ENCODE measurements at regions of chr16 and their contacts with region 1.

Region 1: GRCh38 chr16:10918294-10919002 is 23.8 kb downstream of the DEXI start:
- DNase-seq: peak; percentile 91 to 95 (median 94)
- ATAC-seq: peak; percentile 34 to 78 (median 71)
- H3K4me3 ChIP-seq: peak overlapping the region in 7 of 12 donors; percentile 14 to 51 (median 27)
- H3K27ac ChIP-seq: peak overlapping the region in 10 of 12 donors; percentile 26 to 72 (median 64)
- H3K4me1 ChIP-seq: peaks cover 15 to 58% (median 38%) of the 10 kb centered on the region in 12 donors
- H3K27me3 ChIP-seq: no peaks in the 10 kb centered on the region
- CTCF ChIP-seq: peak; percentile 91 to 99 (median 97)
- POLR2A ChIP-seq: no peak

Region 2: DNA sequence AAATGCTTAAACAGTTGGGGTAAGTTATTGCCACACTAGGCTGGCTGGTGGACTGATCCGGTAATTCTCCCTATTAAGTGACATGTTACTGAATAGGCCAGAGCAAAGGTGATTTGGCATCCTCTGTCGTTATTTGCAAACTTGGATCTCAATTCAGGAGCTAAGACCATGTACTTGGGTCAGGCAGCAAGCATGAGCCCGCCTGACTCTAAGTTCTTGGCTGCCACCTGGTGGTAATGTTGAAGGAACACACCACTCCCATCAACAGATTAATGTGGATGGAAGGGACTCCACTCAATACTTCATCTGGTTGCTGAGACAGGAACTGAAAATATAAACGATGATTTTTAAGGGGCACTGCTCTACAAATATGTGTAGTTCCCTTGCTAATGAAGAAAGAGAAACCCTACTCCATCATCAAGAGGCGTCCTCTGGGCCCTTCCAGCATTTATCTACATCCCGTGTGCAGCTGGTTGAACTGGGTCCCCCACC is 408.9 kb before region 1 on chr16:
- intact Hi-C with region 1: loop called in 6 of 10 experiments (anchors 2 to 10 kb)
- DNase-seq: peak in 4 of 5 donors; percentile 49 to 71 (median 60)
- ATAC-seq: peak; percentile 84 to 91 (median 90)
- H3K4me3 ChIP-seq: no peak overlapping the region
- H3K27ac ChIP-seq: no peak overlapping the region
- H3K4me1 ChIP-seq: peaks cover 0 to 8% (median 5%) of the 10 kb centered on the region in 12 donors
- H3K27me3 ChIP-seq: no peaks in the 10 kb centered on the region
- CTCF ChIP-seq: peak; percentile 72 to 93 (median 84)
- POLR2A ChIP-seq: no peak

Region 3: DNA sequence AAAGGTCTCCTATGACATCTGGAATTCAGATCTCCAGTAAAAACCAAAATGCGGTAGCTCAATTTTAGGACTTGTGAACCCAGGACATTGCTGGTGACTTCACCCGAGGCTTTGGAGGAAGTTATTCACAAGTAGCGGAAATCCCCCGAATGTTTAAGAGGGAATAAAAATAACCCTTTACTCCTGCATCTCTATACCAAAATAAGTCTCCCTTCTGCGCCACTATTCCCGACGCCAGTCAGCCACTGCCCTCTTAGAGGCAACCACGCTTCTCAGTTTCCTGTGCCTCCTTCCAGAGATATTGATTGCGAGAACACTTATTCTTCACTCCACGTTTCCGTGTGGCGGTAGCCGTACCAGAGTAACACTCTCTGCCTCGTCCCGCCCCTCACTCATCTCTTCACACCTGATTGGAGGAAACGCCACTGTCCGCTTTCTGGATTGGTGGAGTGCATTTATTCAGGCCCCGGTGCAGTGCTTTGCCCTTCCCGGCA is 365.4 kb before region 1 on chr16:
- intact Hi-C with region 1: loop called in 1 of 10 experiments (anchors 10 kb)
- DNase-seq: peak; percentile 70 to 76 (median 72)
- ATAC-seq: peak; percentile 85 to 97 (median 96)
- H3K4me3 ChIP-seq: peak overlapping the region in 9 of 12 donors; percentile 35 to 57 (median 40)
- H3K27ac ChIP-seq: peak overlapping the region in 11 of 12 donors; percentile 44 to 78 (median 66)
- H3K4me1 ChIP-seq: peaks cover 0 to 58% (median 39%) of the 10 kb centered on the region in 12 donors
- H3K27me3 ChIP-seq: no peaks in the 10 kb centered on the region
- CTCF ChIP-seq: no peak
- POLR2A ChIP-seq: no peak

Region 4: DNA sequence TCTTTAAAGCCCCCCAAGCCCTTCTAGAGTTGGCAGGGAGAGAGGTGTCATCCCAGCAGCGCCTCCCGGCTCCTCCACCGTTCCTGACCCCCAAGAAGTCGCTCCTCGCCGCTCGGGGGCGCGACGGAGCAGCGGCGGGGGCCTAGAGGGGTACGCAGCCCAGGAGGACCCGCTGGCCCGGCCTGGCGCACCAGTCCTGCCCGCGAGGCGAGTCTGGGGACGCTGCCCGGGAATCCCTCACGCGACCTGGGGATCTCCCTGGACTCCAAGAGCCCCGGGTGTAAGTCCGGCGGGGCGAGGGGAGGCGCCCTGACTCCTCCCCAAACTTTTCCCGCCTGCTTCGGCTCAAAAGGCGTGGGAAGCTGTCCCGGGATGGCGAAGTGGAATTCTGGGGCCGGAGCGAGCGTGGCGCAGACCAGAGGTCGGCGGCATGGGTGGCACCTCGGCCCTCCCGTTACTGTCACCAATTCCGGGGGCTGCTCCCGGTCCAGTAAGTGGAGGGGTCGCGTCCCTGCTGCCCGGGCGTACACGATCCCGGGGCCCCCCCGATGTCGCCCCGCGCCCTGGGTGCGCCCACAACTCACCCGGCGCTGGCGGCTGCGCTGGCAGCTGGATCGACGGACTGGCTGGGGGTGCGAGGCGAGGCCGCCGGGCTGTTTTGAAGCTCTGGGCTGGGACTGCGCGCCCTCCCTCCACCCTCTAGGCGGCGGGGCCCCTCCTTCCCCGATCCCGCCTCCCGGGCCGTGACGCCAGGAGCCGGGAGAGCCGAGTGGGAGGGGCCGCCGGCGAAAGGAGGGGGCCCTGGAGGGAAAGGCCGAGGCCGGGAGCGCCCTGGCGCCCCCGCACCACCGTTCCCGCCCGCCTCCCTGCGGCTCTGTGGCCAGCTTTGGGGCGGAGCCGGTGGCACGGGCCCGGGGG is 338.2 kb before region 1 on chr16 and contains the start of gene EMP2:
- intact Hi-C with region 1: loop called in 2 of 10 experiments (anchors 5 kb)
- DNase-seq: peak; percentile 90 to 92 (median 90)
- ATAC-seq: peak; percentile 59 to 89 (median 86)
- H3K4me3 ChIP-seq: peak within 1 kb of the TSS; percentile 69 to 100 (median 93)
- H3K27ac ChIP-seq: peak within 1 kb of the TSS; percentile 85 to 99 (median 96)
- H3K4me1 ChIP-seq: peaks cover 6 to 56% (median 45%) of the 10 kb centered on the region in 12 donors
- H3K27me3 ChIP-seq: peaks cover 0 to 21% (median 0%) of the 10 kb centered on the region in 9 donors
- CTCF ChIP-seq: peak; percentile 37 to 78 (median 60)
- POLR2A ChIP-seq: peak; percentile 48 to 96
- total RNA-seq, gene EMP2: 37.8 to 103 (median 64.8) TPM

Region 5: GRCh38 chr16:10737068-10737625 is 181.3 kb before region 1 on chr16:
- intact Hi-C with region 1: loop called in 4 of 10 experiments (anchors 2 to 5 kb)
- DNase-seq: peak in 4 of 5 donors; percentile 44 to 68 (median 63)
- ATAC-seq: peak; percentile 19 to 63 (median 55)
- H3K4me3 ChIP-seq: peak overlapping the region in 6 of 12 donors; percentile 2 to 22 (median 10)
- H3K27ac ChIP-seq: peak overlapping the region in 11 of 12 donors; percentile 68 to 94 (median 85)
- H3K4me1 ChIP-seq: peaks cover 5 to 24% (median 18%) of the 10 kb centered on the region in 12 donors
- H3K27me3 ChIP-seq: no peaks in the 10 kb centered on the region
- CTCF ChIP-seq: peak; percentile 88 to 96 (median 94)
- POLR2A ChIP-seq: no peak

Region 6: DNA sequence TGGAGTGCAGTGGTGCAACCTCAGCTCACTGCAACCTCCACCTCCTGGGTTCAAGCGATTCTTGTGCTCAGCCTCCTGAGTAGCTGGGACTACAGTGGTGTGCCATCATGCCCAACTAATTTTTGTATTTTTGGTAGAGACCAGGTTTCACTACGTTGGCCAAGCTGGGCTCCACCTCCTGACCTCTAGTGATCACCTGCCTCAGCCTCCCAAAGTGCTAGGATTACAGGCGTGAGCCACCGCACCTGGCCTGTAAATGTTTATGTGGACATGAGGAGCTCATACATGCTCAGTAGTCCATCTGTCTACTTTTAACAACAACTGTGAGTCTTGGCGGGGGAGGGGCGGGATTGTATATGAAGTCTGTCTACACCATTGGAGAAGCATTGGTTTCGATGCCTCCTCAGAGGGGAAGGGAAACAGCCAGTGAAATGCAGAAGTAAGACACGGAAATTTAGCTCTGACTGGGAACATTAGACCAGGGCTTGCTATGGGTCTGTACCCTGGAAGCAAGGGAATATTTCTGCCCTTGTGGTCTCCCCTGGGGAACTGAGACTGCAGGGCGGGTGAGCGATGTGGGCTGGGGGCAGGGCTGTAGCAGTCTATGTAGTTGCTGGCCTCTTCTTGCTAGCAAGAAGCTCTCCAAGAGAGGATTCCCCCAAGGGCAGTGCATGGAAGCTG is 165.5 kb before region 1 on chr16:
- intact Hi-C with region 1: loop called in 4 of 10 experiments (anchors 5 kb)
- DNase-seq: peak; percentile 56 to 86 (median 59)
- ATAC-seq: peak; percentile 5 to 60 (median 30)
- H3K4me3 ChIP-seq: no peak overlapping the region
- H3K27ac ChIP-seq: peak overlapping the region in 3 of 12 donors; percentile 36 to 84 (median 46)
- H3K4me1 ChIP-seq: peaks cover 0 to 49% (median 6%) of the 10 kb centered on the region in 12 donors
- H3K27me3 ChIP-seq: no peaks in the 10 kb centered on the region
- CTCF ChIP-seq: no peak
- POLR2A ChIP-seq: no peak

Region 7: GRCh38 chr16:10835281-10835931 is 83.0 kb before region 1 on chr16:
- intact Hi-C with region 1: loop called in 4 of 10 experiments (anchors 5 to 10 kb)
- DNase-seq: no peak
- ATAC-seq: no peak
- H3K4me3 ChIP-seq: no peak overlapping the region
- H3K27ac ChIP-seq: no peak overlapping the region
- H3K4me1 ChIP-seq: peaks cover 0 to 13% (median 3%) of the 10 kb centered on the region in 12 donors
- H3K27me3 ChIP-seq: no peaks in the 10 kb centered on the region
- CTCF ChIP-seq: no peak
- POLR2A ChIP-seq: no peak